Activated naive CD4-positive, alpha-beta T cell treated with anti-CD3 and anti-CD28 coated beads for 36 hours (primary cell): ENCODE measurements at regions of chr1 and their contacts with region 1.

Region 1: GRCh38 chr1:204806943-204807687 is 63.5 kb upstream of the NFASC start:
- DNase-seq: peak; percentile 92
- H3K4me3 Mint-ChIP-seq: peak overlapping the region; percentile 76
- H3K27ac Mint-ChIP-seq: peak overlapping the region; percentile 74
- H3K4me1 Mint-ChIP-seq: peaks cover 9% of the 10 kb centered on the region
- H3K27me3 Mint-ChIP-seq: no peaks in the 10 kb centered on the region

Region 2: GRCh38 chr1:204162231-204163074 is 644.7 kb before region 1 on chr1:
- CTCF ChIA-PET with region 1: interaction called, 5 read pairs
- intact Hi-C with region 1: loop called (anchors 1 kb)
- DNase-seq: peak; percentile 87
- H3K4me3 Mint-ChIP-seq: no peak overlapping the region
- H3K27ac Mint-ChIP-seq: no peak overlapping the region
- H3K4me1 Mint-ChIP-seq: no peaks in the 10 kb centered on the region
- H3K27me3 Mint-ChIP-seq: peaks cover 1% of the 10 kb centered on the region

Region 3: DNA sequence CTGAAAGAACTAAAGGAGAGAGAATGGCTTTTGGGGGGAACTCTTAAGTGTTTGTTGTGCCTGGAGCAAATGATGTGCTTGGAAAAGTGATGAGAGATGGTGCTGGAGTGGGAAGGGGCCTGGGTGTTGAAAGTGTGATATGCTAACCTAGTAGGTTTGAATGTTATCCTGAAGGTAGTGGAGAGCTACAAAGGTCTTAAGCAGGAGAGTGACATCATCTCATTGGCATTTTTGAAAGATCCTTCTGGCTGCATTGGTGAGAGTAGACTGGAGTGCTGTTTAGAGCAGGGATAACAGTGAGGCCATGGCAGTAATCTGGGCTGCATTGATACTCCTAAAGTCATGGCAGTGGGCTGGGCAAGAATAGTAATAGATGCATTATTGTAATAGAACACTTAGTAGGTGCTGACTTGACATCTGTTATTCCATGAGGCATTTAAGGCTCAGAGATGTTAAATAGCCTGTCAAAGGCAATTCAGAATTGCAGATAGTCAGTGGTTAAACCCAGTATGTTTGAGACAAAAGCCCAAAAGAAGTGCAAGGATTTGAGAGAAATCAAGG is 246.4 kb before region 1 on chr1:
- CTCF ChIA-PET with region 1: interaction called, 89 read pairs
- intact Hi-C with region 1: no loop called
- DNase-seq: no peak
- H3K4me3 Mint-ChIP-seq: no peak overlapping the region
- H3K27ac Mint-ChIP-seq: no peak overlapping the region
- H3K4me1 Mint-ChIP-seq: peaks cover 61% of the 10 kb centered on the region
- H3K27me3 Mint-ChIP-seq: no peaks in the 10 kb centered on the region

Region 4: DNA sequence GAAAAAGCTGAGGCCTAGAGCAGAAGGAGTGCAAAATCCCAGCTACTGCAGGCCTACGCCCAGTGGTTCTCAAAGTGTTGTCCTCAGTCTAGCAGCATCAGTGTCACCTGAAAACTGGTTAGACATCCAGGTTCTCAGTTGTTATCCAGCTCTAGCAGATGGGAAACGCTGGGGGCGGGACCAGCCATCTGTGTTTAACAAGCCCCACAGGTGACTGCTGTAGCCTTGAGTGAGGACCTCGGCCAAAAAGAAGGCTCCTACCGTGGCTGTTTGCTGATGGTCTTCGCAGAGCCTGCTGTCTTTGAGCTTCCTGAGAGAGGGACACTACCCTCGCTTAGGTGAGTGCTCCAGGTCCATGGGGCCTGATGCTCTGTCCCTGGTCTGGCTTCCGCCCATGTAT is 191.2 kb before region 1 on chr1:
- CTCF ChIA-PET with region 1: interaction called, 13 read pairs
- intact Hi-C with region 1: no loop called
- DNase-seq: no peak
- H3K4me3 Mint-ChIP-seq: no peak overlapping the region
- H3K27ac Mint-ChIP-seq: no peak overlapping the region
- H3K4me1 Mint-ChIP-seq: no peaks in the 10 kb centered on the region
- H3K27me3 Mint-ChIP-seq: no peaks in the 10 kb centered on the region

Region 5: DNA sequence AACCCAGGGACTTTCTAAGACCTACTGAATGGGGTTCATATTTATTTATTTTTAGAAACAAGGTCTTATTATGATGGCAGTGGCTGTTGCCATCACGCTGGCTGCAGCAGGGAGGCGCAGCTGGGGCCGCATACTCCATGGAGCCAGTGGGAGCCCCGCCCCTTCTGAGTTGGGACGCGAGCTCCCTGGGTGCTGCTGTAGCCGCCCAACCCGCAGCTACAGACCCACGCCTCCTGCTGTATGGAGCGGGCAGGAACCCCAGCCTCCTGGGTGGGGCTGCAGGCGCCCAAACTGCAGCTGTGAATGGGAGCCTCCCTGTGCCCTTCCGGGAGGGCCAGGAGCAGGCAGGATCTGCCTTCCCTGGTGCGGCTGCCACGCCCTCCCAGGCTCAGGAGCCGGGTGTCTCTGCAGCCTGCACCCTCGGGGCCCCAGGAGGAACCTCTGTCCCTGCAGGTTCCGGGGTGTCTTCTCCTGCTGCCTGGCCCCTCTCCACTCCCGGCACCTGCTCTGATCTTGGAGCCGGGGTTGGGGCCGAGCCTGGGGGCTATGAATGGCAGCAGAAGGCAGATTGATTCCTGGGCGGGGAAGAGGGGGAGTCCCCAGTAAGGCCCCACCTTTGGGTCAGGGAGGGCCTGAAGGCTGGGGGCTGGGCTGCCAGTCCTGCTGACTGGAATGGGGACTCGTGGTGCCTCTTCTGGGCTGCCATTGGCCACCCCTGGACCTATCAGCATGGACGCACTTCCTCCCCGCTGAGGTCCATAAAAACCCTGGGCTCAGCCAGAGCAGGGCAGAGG is 55.0 kb before region 1 on chr1:
- CTCF ChIA-PET with region 1: interaction called, 13 read pairs
- intact Hi-C with region 1: loop called (anchors 1 kb)
- DNase-seq: no peak
- H3K4me3 Mint-ChIP-seq: no peak overlapping the region
- H3K27ac Mint-ChIP-seq: no peak overlapping the region
- H3K4me1 Mint-ChIP-seq: no peaks in the 10 kb centered on the region
- H3K27me3 Mint-ChIP-seq: no peaks in the 10 kb centered on the region

Region 6: DNA sequence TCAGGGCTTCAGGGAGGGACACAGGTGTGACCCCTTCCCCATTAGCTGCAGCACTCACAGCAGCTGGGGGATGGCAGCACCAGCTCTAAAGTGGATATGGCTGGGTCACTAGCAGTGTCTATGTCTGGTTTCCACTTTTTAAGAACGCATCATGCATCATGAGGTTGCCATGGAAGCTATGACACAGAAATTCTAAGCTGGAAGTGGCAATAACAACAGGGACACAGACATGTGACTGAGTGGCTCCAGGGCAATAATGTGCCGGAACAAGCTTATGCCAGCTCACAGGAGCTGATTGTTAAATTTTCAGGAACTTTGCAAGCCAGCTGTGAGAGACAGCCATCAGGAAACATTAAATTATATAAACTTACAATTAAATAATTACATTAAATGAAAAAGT is 12.4 kb after region 1 on chr1:
- CTCF ChIA-PET with region 1: interaction called, 27 read pairs
- intact Hi-C with region 1: no loop called
- DNase-seq: no peak
- H3K4me3 Mint-ChIP-seq: no peak overlapping the region
- H3K27ac Mint-ChIP-seq: no peak overlapping the region
- H3K4me1 Mint-ChIP-seq: no peaks in the 10 kb centered on the region
- H3K27me3 Mint-ChIP-seq: peaks cover 9% of the 10 kb centered on the region

Region 7: GRCh38 chr1:205255941-205256780 is 449.0 kb after region 1 on chr1:
- CTCF ChIA-PET with region 1: no interaction called
- intact Hi-C with region 1: no loop called
- DNase-seq: peak; percentile 93
- H3K4me3 Mint-ChIP-seq: no peak overlapping the region
- H3K27ac Mint-ChIP-seq: peak overlapping the region; percentile 42
- H3K4me1 Mint-ChIP-seq: peaks cover 25% of the 10 kb centered on the region
- H3K27me3 Mint-ChIP-seq: no peaks in the 10 kb centered on the region